Activated CD4-positive, alpha-beta T cell treated with anti-CD3 and anti-CD28 coated beads for 36 hours (primary cell): ENCODE measurements at regions of chrX and their contacts with region 1.

Region 1: DNA sequence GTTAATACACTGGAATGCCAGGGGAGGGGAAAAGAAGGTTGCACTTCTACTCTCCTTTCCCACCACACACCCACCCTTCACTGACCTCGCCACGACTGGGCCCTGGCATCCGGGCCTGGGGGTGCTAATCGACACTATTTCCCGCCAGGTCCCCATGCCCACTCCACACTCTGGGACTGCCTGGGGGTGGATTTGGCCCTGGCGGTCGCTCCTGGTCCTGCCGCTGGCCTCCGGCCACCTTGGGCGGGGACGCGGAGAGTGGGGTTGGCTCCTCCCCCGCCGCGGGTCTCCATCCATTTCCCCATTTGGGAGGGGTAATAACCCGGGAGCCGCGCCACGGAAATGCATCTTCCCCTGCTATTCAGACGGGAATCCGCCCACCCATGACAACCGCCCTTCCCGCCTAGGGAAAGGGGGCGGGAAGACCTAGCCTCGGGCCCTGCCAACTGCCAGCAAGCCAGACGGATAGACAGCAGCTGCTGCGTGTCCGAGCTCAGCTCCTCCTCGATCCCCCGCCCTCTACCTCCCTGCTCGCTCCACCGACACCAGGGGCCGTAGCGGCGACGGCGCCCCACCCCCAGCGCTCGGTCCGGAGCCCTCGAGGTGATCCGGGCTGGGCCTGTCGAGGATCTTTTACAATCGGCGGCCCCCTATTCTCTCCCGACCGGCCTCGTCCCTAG is 78.1 kb downstream of the RLIM start:
- DNase-seq: peak; percentile 51
- ATAC-seq: peak; percentile 30
- H3K4me3 Mint-ChIP-seq: peak overlapping the region; percentile 66
- H3K27ac Mint-ChIP-seq: peak overlapping the region; percentile 74
- H3K4me1 Mint-ChIP-seq: peaks cover 36% of the 10 kb centered on the region
- H3K27me3 Mint-ChIP-seq: no peaks in the 10 kb centered on the region

Region 2: DNA sequence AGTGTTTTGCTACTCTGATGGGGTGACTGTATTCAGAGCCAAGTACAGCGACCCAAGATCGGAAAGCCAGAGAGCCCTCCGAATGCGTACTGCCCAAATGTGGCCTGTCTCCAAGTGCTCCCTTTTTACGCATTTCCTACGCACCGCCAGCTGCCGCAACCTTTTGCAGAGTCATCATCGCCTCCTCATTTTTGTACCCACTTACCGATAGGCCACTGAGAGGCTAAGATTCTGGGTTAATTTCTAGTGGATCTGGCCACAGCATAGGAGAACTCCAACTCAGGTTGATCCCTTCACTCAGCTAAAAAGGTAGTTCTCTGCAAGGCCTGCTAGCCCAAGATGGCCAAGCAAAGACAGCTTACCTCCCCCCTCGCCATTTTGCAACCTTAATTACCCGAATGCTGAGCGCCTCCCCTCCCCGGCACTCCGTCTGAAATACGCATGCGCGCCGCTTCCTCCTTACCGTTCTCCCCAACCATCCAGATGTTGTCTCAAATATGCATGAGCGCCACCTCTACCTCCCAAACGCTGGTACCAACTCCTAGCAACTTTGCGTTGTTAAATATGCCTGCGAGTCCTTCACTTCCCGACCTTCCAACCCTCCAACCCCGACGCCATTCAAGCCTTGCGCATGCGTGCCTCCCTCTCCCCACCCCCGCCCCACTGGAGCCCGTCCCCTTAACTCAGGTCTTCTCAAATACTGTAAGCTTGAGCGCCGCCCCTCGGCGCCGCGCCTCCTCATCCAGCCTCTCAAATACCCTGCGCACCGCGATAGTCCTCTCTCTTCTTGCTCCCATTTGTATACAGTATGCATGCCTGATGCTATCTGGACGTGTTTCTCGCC is 244.1 kb before region 1 on chrX:
- CTCF ChIA-PET with region 1: no interaction called
- POLR2A ChIA-PET with region 1: no interaction called
- intact Hi-C with region 1: loop called in 1 of 2 experiments (anchors 1 kb)
- DNase-seq: peak; percentile 90
- ATAC-seq: peak; percentile 89
- H3K4me3 Mint-ChIP-seq: peak overlapping the region; percentile 89
- H3K27ac Mint-ChIP-seq: peak overlapping the region; percentile 98
- H3K4me1 Mint-ChIP-seq: peaks cover 17% of the 10 kb centered on the region
- H3K27me3 Mint-ChIP-seq: no peaks in the 10 kb centered on the region

Region 3: GRCh38 chrX:74382613-74383012 is 153.7 kb before region 1 on chrX:
- CTCF ChIA-PET with region 1: no interaction called
- POLR2A ChIA-PET with region 1: no interaction called
- intact Hi-C with region 1: loop called in 1 of 2 experiments (anchors 5 kb)
- DNase-seq: peak; percentile 76
- ATAC-seq: peak; percentile 80
- H3K4me3 Mint-ChIP-seq: no peak overlapping the region
- H3K27ac Mint-ChIP-seq: no peak overlapping the region
- H3K4me1 Mint-ChIP-seq: no peaks in the 10 kb centered on the region
- H3K27me3 Mint-ChIP-seq: peaks cover 2% of the 10 kb centered on the region

Region 4: GRCh38 chrX:74421036-74421739 is 115.1 kb before region 1 on chrX and contains the start of gene SLC16A2:
- CTCF ChIA-PET with region 1: no interaction called
- POLR2A ChIA-PET with region 1: no interaction called
- intact Hi-C with region 1: loop called in 1 of 2 experiments (anchors 10 kb)
- DNase-seq: peak; percentile 56
- ATAC-seq: peak; percentile 66
- H3K4me3 Mint-ChIP-seq: peak within 1 kb of the TSS; percentile 70
- H3K27ac Mint-ChIP-seq: peak within 1 kb of the TSS; percentile 42
- H3K4me1 Mint-ChIP-seq: peaks cover 3% of the 10 kb centered on the region
- H3K27me3 Mint-ChIP-seq: peaks cover 19% of the 10 kb centered on the region
- total RNA-seq, gene SLC16A2: 1.2 to 1.5 TPM

Region 5: DNA sequence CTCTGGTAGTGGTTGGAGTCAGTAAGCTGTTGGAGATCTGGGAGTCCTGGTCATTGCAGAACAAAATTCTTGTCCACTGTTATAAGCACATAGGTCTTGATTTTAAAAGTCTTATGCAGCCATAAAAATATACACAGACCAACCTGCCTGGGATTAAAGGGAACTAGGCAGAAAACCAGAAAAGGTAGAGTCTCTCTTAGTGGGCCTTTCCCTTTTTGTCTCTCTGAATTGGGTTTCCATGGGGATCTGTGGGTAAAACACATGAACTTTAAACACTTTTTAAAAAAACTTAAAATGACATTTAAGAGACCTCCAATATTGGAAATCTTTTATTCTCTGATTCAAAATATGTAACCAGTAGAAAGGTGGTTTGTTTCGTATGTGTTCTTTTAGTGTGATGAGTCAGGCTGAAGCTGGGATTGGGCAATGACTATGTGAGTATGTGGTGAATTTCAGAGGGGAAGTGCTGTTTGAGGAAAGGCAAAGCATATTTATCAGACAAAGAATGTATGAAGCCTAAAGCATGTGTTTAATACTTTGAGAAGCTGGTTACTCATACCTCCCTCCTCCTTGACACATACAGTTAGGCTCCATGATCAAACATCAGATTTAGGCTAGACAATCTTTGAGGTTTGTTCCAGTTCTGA is 85.4 kb before region 1 on chrX:
- CTCF ChIA-PET with region 1: no interaction called
- POLR2A ChIA-PET with region 1: interaction called, 4 read pairs
- intact Hi-C with region 1: loop called (anchors 1 to 2 kb)
- DNase-seq: peak; percentile 41
- ATAC-seq: peak; percentile 92
- H3K4me3 Mint-ChIP-seq: no peak overlapping the region
- H3K27ac Mint-ChIP-seq: peak overlapping the region; percentile 65
- H3K4me1 Mint-ChIP-seq: peaks cover 28% of the 10 kb centered on the region
- H3K27me3 Mint-ChIP-seq: no peaks in the 10 kb centered on the region

Region 6: GRCh38 chrX:74510401-74510800 is 25.9 kb before region 1 on chrX:
- CTCF ChIA-PET with region 1: no interaction called
- POLR2A ChIA-PET with region 1: no interaction called
- intact Hi-C with region 1: no loop called
- DNase-seq: no peak
- ATAC-seq: no peak
- H3K4me3 Mint-ChIP-seq: no peak overlapping the region
- H3K27ac Mint-ChIP-seq: no peak overlapping the region
- H3K4me1 Mint-ChIP-seq: no peaks in the 10 kb centered on the region
- H3K27me3 Mint-ChIP-seq: peaks cover 1% of the 10 kb centered on the region

Region 7: GRCh38 chrX:74579597-74580198 is 43.4 kb after region 1 on chrX:
- CTCF ChIA-PET with region 1: no interaction called
- POLR2A ChIA-PET with region 1: no interaction called
- intact Hi-C with region 1: loop called in 1 of 2 experiments (anchors 2 kb)
- DNase-seq: no peak
- ATAC-seq: no peak
- H3K4me3 Mint-ChIP-seq: no peak overlapping the region
- H3K27ac Mint-ChIP-seq: peak overlapping the region; percentile 81
- H3K4me1 Mint-ChIP-seq: peaks cover 16% of the 10 kb centered on the region
- H3K27me3 Mint-ChIP-seq: no peaks in the 10 kb centered on the region

Region 8: DNA sequence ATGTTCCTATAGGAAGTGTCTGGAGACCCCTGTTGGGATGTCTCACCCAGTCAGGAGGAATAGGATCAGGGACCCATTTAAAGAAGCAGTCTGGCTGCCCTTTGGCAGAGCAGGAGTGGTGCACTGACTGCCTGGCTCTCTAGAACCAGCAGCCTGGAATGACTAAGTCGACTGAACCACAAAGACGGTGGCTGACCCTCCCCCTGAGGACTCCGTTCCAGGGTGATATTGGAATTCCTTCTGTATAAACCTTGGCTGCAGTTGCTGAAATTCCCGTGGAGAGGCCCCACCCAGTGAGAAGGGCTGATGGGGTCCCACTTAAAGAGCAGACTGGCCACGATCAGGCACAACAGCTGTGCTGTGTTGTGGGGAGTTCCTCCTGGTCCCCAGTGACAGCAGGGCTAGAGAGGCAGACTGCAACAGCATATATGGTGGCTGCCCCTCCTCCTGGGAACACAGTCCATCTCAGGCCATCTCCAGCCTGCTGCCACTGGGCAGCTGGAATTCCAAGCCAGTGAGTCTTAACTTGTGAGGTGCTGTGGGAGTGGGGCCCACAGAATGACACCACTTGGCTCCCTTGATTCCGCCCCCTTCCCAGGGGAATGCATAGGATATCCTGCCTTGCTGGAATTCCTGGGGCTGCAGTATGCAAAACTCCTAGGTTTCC is 119.9 kb after region 1 on chrX:
- CTCF ChIA-PET with region 1: no interaction called
- POLR2A ChIA-PET with region 1: no interaction called
- intact Hi-C with region 1: no loop called
- DNase-seq: no peak
- ATAC-seq: no peak
- H3K4me3 Mint-ChIP-seq: no peak overlapping the region
- H3K27ac Mint-ChIP-seq: no peak overlapping the region
- H3K4me1 Mint-ChIP-seq: no peaks in the 10 kb centered on the region
- H3K27me3 Mint-ChIP-seq: no peaks in the 10 kb centered on the region